ENCODE measurements at regions of chr17 and their contacts with region 1.

Region 1: GRCh38 chr17:82716203-82717010 is at the start of gene FN3KRP:
- DNase-seq: peak; percentile 75 to 90 (median 86)
- ATAC-seq: peak; percentile 98
- H3K4me3 ChIP-seq: peak within 1 kb of the TSS; percentile 83
- H3K4me3 Mint-ChIP-seq: peak within 1 kb of the TSS; percentile 85 to 98 (median 94)
- H3K27ac ChIP-seq: peak within 1 kb of the TSS; percentile 85
- H3K27ac Mint-ChIP-seq: peak within 1 kb of the TSS; percentile 67 to 95 (median 89)
- H3K4me1 ChIP-seq: peaks cover 12 to 13% of the 10 kb centered on the region in 2 donors
- H3K4me1 Mint-ChIP-seq: peaks cover 11 to 28% (median 17%) of the 10 kb centered on the region in 7 donors
- H3K27me3 ChIP-seq: no peaks in the 10 kb centered on the region
- H3K27me3 Mint-ChIP-seq: no peaks in the 10 kb centered on the region
- total RNA-seq, gene FN3KRP: 29.9 to 38.7 (median 35.7) TPM

Region 2: DNA sequence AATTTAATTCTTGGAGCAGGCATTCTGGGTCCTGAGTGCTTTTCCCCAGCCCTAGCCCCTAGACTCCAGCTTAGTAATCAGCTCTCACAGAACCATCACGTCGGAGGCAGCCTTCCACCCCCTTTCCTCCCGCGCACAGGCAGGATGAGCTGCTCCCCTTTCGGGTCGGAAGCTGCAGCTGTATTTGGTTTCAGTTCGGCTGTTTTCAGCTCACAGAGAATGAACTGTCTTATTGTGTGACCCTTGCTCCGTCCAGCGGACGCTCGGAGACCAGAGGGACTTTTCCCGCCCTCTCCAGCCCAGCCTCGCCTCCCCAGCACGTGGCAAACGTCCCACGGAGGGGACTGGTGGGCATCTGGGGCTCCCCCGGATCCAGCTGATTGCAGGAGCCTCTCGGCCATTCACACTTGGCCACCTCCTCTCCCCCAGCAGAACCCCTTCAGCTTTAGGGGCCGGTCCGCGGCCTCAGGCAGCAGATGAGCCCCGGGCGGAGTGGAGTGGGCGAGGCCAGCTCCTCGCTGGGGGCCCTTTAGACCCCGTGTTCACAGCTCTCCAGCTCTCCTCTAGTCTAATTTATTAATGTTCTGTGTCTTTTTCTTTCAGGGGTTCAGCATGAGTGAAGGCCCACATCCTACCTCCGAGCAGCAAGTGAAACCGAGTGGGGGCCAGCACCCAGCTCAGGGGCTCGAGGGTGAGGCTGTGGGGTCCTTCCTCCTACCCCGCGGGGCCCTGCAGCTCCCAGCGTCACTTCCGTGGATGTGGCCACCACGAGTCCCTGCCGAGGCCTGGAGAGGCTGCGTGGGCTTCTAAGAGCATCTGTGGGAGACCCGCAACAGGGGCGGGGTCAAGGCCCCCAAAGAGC is 345.7 kb before region 1 on chr17:
- CTCF ChIA-PET with region 1: no interaction called
- POLR2A ChIA-PET with region 1: no interaction called
- intact Hi-C with region 1: no loop called
- DNase-seq: peak in 2 of 9 donors; percentile 30 to 50
- ATAC-seq: no peak
- H3K4me3 ChIP-seq: peak overlapping the region; percentile 31
- H3K4me3 Mint-ChIP-seq: peak overlapping the region; percentile 75 to 89 (median 82)
- H3K27ac ChIP-seq: no peak overlapping the region
- H3K27ac Mint-ChIP-seq: no peak overlapping the region
- H3K4me1 ChIP-seq: peaks cover 0 to 7% of the 10 kb centered on the region in 2 donors
- H3K4me1 Mint-ChIP-seq: peaks cover 7 to 20% (median 17%) of the 10 kb centered on the region in 7 donors
- H3K27me3 ChIP-seq: peaks cover 3 to 5% of the 10 kb centered on the region in 2 donors
- H3K27me3 Mint-ChIP-seq: peaks cover 27 to 60% (median 41%) of the 10 kb centered on the region in 5 donors

Region 3: DNA sequence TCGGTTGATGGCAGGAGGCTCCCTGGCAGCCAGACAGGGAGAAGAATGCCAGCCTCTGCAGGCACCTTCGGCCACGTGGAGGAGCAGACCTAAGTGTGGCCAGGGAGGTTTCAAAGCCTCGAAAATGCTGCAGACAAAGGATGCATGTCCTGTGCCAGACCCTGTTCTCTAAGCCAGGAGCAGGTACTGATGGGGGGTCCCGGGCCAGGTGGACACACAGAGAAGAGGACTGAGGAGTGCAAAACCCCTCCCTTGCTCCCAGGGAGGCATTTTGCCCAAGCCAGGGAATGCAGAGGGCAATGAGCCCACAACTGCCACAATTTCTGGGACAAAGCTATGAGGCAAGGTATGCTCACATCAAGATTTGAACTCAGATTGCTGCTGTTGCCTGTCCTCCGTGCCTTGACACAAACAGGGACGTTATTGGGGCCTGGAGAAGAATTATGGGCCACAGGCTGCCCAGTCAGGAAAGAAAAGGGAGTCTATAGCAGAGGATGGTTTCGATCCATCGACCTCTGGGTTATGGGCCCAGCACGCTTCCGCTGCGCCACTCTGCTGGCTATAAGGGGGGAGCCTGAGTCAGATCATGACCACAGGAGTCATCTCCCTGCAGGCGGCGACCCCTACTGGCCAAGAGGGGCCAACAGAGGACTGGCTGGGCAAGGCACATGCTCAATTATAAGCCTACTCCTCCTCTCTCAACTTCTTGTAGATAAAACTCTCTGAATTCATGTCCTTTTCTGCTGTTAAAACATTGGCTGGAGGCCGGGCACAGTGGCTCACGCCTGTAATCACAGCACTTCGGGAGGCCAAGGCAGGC is 222.0 kb before region 1 on chr17:
- CTCF ChIA-PET with region 1: no interaction called
- POLR2A ChIA-PET with region 1: no interaction called
- intact Hi-C with region 1: loop called in 1 of 2 experiments (anchors 1 kb)
- DNase-seq: peak; percentile 68 to 92 (median 80)
- ATAC-seq: peak; percentile 80
- H3K4me3 ChIP-seq: no peak overlapping the region
- H3K4me3 Mint-ChIP-seq: peak overlapping the region in 9 of 10 donors; percentile 14 to 84 (median 65)
- H3K27ac ChIP-seq: peak overlapping the region; percentile 28
- H3K27ac Mint-ChIP-seq: peak overlapping the region; percentile 77 to 94 (median 87)
- H3K4me1 ChIP-seq: peaks cover 0 to 9% of the 10 kb centered on the region in 2 donors
- H3K4me1 Mint-ChIP-seq: peaks cover 8 to 33% (median 25%) of the 10 kb centered on the region in 7 donors
- H3K27me3 ChIP-seq: no peaks in the 10 kb centered on the region
- H3K27me3 Mint-ChIP-seq: peaks cover 0 to 2% (median 0%) of the 10 kb centered on the region in 5 donors

Region 4: DNA sequence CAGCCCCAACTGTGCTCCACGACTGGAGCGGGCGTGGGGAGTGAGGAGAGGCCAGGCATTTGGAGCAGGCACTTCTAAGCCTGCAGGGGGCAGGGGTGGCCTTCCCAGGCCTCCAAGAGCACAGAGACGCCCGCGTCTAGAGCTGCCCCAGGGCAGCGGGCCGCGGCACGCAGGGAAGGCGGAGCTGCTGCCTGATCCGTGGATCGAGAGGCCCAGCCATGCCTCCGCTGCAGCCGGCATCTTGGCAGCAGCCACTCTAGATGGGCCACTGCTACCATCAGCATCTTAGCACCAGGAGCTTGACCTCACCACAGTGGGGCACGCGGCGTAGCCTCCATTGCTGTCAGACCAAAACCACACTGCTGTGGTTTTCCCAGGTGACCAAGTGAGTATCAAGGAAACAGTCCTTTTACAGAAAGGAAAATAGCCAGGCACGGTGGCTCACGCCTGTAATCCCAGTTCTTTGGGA is 47.7 kb before region 1 on chr17:
- CTCF ChIA-PET with region 1: no interaction called
- POLR2A ChIA-PET with region 1: no interaction called
- intact Hi-C with region 1: loop called in 1 of 2 experiments (anchors 1 kb)
- DNase-seq: peak in 7 of 9 donors; percentile 23 to 45 (median 42)
- ATAC-seq: peak; percentile 92
- H3K4me3 ChIP-seq: no peak overlapping the region
- H3K4me3 Mint-ChIP-seq: peak overlapping the region in 6 of 10 donors; percentile 21 to 60 (median 47)
- H3K27ac ChIP-seq: no peak overlapping the region
- H3K27ac Mint-ChIP-seq: no peak overlapping the region
- H3K4me1 ChIP-seq: no peaks in the 10 kb centered on the region
- H3K4me1 Mint-ChIP-seq: peaks cover 0 to 12% (median 9%) of the 10 kb centered on the region in 7 donors
- H3K27me3 ChIP-seq: no peaks in the 10 kb centered on the region
- H3K27me3 Mint-ChIP-seq: no peaks in the 10 kb centered on the region

Region 5: GRCh38 chr17:82734987-82735866 is 18.8 kb after region 1 on chr17 and contains the start of gene FN3K:
- CTCF ChIA-PET with region 1: no interaction called
- POLR2A ChIA-PET with region 1: interaction called, 5 read pairs
- intact Hi-C with region 1: loop called in 1 of 2 experiments (anchors 2 kb)
- DNase-seq: peak in 6 of 9 donors; percentile 19 to 52 (median 34)
- ATAC-seq: peak; percentile 81
- H3K4me3 ChIP-seq: peak within 1 kb of the TSS; percentile 58
- H3K4me3 Mint-ChIP-seq: peak within 1 kb of the TSS; percentile 66 to 85 (median 76)
- H3K27ac ChIP-seq: peak within 1 kb of the TSS; percentile 55
- H3K27ac Mint-ChIP-seq: peak within 1 kb of the TSS in 4 of 9 donors; percentile 14 to 78 (median 48)
- H3K4me1 ChIP-seq: no peaks in the 10 kb centered on the region
- H3K4me1 Mint-ChIP-seq: peaks cover 0 to 11% (median 6%) of the 10 kb centered on the region in 7 donors
- H3K27me3 ChIP-seq: no peaks in the 10 kb centered on the region
- H3K27me3 Mint-ChIP-seq: no peaks in the 10 kb centered on the region
- total RNA-seq, gene FN3K: 3.9 to 14.1 (median 12.0) TPM

Region 6: DNA sequence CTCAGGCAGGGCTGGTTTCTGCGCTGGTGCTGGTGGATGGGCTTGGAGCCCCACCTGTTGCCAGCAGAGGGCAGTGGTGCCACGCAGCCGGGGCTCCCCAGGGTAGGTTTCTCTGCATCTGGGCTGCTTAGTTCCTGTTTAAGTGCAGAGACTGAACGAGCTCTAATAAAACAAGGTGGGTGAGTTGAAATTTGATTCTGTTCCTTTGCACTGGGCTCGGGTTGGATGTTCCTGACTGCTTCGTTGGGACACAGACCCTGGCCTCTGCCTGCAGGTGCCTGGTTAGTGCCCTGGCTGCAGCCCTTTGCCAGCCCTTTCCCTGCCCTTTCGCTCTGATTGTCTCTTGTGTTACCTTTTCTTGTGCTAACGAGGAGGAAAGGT is 65.5 kb after region 1 on chr17:
- CTCF ChIA-PET with region 1: no interaction called
- POLR2A ChIA-PET with region 1: no interaction called
- intact Hi-C with region 1: no loop called
- DNase-seq: peak; percentile 71 to 90 (median 84)
- ATAC-seq: peak; percentile 99
- H3K4me3 ChIP-seq: no peak overlapping the region
- H3K4me3 Mint-ChIP-seq: no peak overlapping the region
- H3K27ac ChIP-seq: no peak overlapping the region
- H3K27ac Mint-ChIP-seq: peak overlapping the region in 6 of 9 donors; percentile 11 to 74 (median 46)
- H3K4me1 ChIP-seq: no peaks in the 10 kb centered on the region
- H3K4me1 Mint-ChIP-seq: peaks cover 5 to 18% (median 12%) of the 10 kb centered on the region in 7 donors
- H3K27me3 ChIP-seq: no peaks in the 10 kb centered on the region
- H3K27me3 Mint-ChIP-seq: no peaks in the 10 kb centered on the region

Region 7: GRCh38 chr17:83024218-83024971 is 308.0 kb after region 1 on chr17:
- CTCF ChIA-PET with region 1: no interaction called
- POLR2A ChIA-PET with region 1: no interaction called
- intact Hi-C with region 1: no loop called
- DNase-seq: no peak
- ATAC-seq: no peak
- H3K4me3 ChIP-seq: no peak overlapping the region
- H3K4me3 Mint-ChIP-seq: no peak overlapping the region
- H3K27ac ChIP-seq: no peak overlapping the region
- H3K27ac Mint-ChIP-seq: peak overlapping the region in 1 of 9 donors; percentile 70
- H3K4me1 ChIP-seq: peaks cover 0 to 6% of the 10 kb centered on the region in 2 donors
- H3K4me1 Mint-ChIP-seq: peaks cover 6 to 29% (median 17%) of the 10 kb centered on the region in 7 donors
- H3K27me3 ChIP-seq: no peaks in the 10 kb centered on the region
- H3K27me3 Mint-ChIP-seq: no peaks in the 10 kb centered on the region

Region 8: GRCh38 chr17:83051395-83052233 is 335.2 kb after region 1 on chr17:
- CTCF ChIA-PET with region 1: no interaction called
- POLR2A ChIA-PET with region 1: no interaction called
- intact Hi-C with region 1: loop called in 1 of 2 experiments (anchors 2 kb)
- DNase-seq: peak; percentile 97 to 100 (median 99)
- ATAC-seq: peak; percentile 94
- H3K4me3 ChIP-seq: peak overlapping the region; percentile 75
- H3K4me3 Mint-ChIP-seq: peak overlapping the region; percentile 68 to 91 (median 83)
- H3K27ac ChIP-seq: peak overlapping the region; percentile 91
- H3K27ac Mint-ChIP-seq: peak overlapping the region; percentile 56 to 94 (median 89)
- H3K4me1 ChIP-seq: peaks cover 22 to 26% of the 10 kb centered on the region in 2 donors
- H3K4me1 Mint-ChIP-seq: peaks cover 17 to 39% (median 20%) of the 10 kb centered on the region in 7 donors
- H3K27me3 ChIP-seq: no peaks in the 10 kb centered on the region
- H3K27me3 Mint-ChIP-seq: no peaks in the 10 kb centered on the region

Measured in naive thymus-derived CD4-positive, alpha-beta T cell (primary cell).